ENCODE measurements at regions of chrX and their contacts with region 1.

Region 1: DNA sequence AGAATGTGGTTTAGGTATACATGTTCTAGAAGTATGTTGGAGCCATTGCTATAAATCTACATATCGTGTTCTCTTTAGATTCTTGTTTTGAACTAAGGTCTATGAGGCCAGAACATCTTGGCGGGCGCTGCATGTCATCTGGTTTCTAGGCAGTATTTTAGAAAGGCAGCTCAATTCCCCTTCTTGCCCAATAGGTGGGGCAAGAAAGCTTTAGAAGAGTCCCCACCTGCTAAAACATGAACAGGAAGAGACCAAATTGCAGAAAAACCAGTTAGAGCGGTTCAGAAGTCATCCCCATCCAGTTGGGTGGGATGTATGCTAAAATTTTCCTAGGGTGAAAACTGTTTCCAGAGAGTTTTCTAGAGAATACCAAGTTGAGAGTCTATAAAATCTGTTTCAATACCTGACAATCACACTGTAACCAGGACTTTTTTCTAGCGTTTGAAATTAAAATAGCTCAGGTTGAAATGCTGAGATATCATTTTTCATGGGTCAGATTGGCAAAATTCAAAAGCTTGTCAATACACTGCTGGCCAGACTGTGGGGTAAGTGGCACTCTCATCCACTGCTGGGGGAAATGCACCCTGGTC is 17.5 kb upstream of the SH3KBP1 start:
- DNase-seq: no peak
- ATAC-seq: peak; percentile 78 to 87 (median 84)
- H3K4me3 ChIP-seq: no peak overlapping the region
- H3K27ac ChIP-seq: no peak overlapping the region
- H3K4me1 ChIP-seq: no peaks in the 10 kb centered on the region
- H3K27me3 ChIP-seq: peaks cover 0 to 6% of the 10 kb centered on the region in 2 donors
- CTCF ChIP-seq: peak; percentile 37 to 69 (median 64)
- POLR2A ChIP-seq: no peak

Region 2: DNA sequence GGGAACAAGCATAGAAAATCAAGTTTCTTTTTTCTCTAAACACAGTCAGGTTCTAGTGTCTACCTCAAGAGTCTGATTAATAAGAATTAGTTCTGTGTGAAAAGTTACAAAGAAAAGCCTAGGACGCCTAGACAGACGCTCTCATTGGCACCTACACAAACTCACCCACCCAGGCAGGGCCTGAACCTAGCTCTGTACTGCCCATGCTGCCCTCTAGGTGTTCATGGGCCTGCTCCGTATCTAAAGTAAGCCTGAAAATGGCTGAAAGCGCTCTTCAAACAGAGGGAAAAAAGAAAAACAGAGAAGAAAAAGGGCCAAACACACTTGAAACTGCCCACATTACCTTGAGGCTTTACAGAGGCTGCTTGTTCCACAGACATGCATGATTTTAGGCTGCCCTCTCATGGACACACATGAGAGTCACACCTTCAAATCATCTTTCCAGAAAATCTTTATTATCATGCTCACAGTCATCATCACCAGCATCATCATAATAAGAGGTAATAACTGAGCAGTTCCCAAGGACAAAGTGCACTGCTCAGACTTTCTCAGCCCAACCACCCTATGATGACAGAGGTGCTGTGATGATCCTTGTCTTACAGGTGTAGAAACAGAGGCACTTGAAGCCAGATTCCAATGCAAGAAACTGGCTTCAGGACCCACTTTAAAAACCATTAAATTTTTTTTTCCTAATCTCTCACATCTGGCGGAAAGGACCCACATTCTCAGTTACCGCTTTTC is 162.3 kb after region 1 on chrX:
- intact Hi-C with region 1: loop called in 1 of 2 experiments (anchors 10 kb)
- DNase-seq: no peak
- ATAC-seq: peak; percentile 63 to 89 (median 82)
- H3K4me3 ChIP-seq: no peak overlapping the region
- H3K27ac ChIP-seq: no peak overlapping the region
- H3K4me1 ChIP-seq: no peaks in the 10 kb centered on the region
- H3K27me3 ChIP-seq: no peaks in the 10 kb centered on the region
- CTCF ChIP-seq: peak; percentile 49 to 68 (median 56)
- POLR2A ChIP-seq: no peak

Region 3: GRCh38 chrX:20091499-20091898 is 186.6 kb after region 1 on chrX:
- intact Hi-C with region 1: no loop called
- DNase-seq: no peak
- ATAC-seq: no peak
- H3K4me3 ChIP-seq: no peak overlapping the region
- H3K27ac ChIP-seq: no peak overlapping the region
- H3K4me1 ChIP-seq: no peaks in the 10 kb centered on the region
- H3K27me3 ChIP-seq: no peaks in the 10 kb centered on the region
- CTCF ChIP-seq: no peak
- POLR2A ChIP-seq: no peak